Head of caudate nucleus (tissue), 42 donors: ENCODE measurements at regions of chr19 and their contacts with region 1.

Region 1: DNA sequence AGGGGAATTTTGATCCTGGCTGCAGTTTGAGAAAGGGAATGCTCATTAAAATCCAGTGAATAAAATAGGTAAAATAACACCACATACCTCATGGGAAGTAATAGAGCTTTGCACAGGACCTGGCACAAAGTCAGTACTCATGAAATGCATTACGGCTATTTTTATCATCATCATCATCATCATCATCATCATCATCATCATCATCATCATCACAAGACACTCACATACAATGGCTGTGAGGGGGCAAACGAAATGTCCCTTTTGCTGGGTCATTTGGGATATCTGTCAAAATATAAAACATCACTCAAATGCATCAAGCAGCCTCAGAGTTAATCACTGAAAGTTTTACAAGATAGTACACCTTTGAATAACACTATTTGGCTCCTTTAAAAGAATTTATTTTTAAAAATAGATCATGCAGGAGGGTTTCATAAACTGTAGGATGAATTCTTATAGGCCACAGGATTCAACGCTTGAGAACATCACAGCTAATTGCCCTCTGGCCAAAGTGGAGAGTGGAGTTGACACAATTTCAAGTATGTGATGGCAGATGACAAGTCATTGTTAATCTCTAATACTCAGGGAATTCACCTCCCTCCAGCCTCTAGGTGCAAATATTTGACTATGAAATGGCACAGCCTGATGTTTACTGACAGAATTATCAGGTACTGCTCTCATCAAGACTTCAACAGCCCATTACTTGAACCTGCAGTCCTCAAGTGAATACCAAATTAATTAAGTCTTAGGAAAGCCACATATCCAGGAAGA is 14.2 kb upstream of the ZNF599 start:
- DNase-seq: peak in 1 of 42 donors; percentile 0

Region 2: DNA sequence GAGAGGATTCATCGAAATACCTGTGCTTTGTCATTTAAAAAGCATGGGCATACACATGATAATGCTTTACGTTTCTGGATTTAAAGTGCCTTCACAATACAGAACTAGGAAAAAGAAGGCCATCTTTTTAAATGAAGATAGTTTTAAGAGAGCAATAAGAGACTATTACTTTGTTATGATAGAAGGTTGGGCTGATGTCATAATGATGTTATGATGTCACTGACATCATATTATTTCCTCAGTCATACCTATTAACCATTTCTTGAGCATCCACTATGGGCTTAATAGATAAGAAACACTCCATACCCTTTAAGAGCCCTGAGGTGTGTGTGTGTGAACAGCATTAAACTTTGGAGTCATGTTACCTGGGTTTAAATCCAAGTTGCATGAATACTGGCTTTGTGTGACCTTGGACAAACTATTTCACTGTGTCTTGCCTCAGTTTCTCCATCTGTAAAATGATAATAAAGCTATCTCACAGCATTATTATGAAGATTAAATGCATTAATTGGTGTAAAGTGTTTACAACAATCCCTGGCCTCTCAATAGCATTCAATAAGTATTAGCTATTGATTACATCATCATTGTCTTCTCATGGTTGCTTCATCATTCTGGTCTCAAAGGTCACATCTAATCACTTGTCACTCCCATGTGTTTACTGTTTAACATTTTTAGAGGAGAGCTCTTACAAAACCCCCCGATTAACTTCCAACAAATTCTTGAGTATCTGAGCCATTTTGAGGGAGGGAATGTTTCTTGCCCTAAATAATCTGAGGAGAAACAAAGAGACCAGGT is 42.1 kb before region 1 on chr19:
- intact Hi-C with region 1: no loop called
- DNase-seq: no peak

Region 3: DNA sequence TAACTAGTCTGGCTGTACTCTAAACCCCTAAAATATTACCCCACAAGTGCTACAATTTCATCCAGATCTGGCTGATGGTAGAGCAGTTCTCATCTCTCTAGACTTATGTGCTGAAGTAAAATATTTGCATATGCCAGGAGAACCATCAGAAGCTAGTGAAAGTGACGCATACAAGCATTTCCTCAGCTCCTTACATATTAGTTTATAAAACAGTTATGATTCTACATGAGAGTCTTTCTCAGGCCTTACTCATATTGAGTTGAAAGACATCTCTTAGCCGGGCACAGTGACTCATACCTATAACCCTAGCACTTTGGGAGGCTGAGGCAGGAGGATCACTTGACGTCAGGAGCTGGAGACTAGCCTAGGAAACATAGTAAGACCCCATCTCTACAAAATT is 123.5 kb after region 1 on chr19:
- intact Hi-C with region 1: loop called (anchors 10 kb)
- DNase-seq: no peak